ENCODE measurements at regions of chr2 and their contacts with region 1.

Region 1: DNA sequence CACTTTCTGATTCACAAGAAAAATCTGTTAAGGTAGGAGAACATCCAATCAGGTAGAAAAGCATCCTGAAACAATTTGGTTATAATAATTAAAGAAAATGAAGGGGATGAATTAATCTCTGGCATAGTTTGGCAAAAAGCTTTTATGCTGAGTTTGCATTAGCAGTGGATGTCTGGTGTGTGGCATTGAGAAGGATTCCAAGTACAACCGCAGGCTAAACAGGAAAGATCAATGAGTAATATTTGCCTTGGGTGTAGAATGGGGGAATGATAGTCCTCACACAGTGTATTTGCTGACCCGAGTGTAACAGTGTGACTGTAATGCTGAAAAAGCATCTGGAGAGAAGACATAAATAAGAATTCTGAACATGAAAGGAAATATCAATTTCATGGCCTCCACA is 68.3 kb upstream of the SESTD1 start:
- DNase-seq: peak; percentile 87
- ATAC-seq: peak; percentile 96
- H3K4me3 ChIP-seq: no peak overlapping the region
- H3K27ac ChIP-seq: 0 out of 2 replicates have a peak overlapping the region, but pooled peaks have one; percentile 5
- H3K4me1 ChIP-seq: peaks cover 31% of the 10 kb centered on the region
- H3K27me3 ChIP-seq: no peaks in the 10 kb centered on the region
- CTCF ChIP-seq: no peak

Region 2: GRCh38 chr2:179233083-179233490 is 99.8 kb before region 1 on chr2:
- CTCF ChIA-PET with region 1: no interaction called
- POLR2A ChIA-PET with region 1: no interaction called
- intact Hi-C with region 1: loop called (anchors 1 kb)
- DNase-seq: peak; percentile 68
- ATAC-seq: peak; percentile 90
- H3K4me3 ChIP-seq: peak overlapping the region; percentile 59
- H3K27ac ChIP-seq: peak overlapping the region; percentile 80
- H3K4me1 ChIP-seq: peaks cover 20% of the 10 kb centered on the region
- H3K27me3 ChIP-seq: no peaks in the 10 kb centered on the region
- CTCF ChIP-seq: no peak

Region 3: GRCh38 chr2:179272406-179273192 is 60.3 kb before region 1 on chr2:
- CTCF ChIA-PET with region 1: no interaction called
- POLR2A ChIA-PET with region 1: interaction called, 4 read pairs
- intact Hi-C with region 1: loop called (anchors 2 kb)
- DNase-seq: peak; percentile 75
- ATAC-seq: peak; percentile 79
- H3K4me3 ChIP-seq: peak overlapping the region; percentile 30; the same call in 1 of the 2 replicates
- H3K27ac ChIP-seq: peak overlapping the region; percentile 89
- H3K4me1 ChIP-seq: peaks cover 60% of the 10 kb centered on the region
- H3K27me3 ChIP-seq: no peaks in the 10 kb centered on the region
- CTCF ChIP-seq: no peak

Region 4: DNA sequence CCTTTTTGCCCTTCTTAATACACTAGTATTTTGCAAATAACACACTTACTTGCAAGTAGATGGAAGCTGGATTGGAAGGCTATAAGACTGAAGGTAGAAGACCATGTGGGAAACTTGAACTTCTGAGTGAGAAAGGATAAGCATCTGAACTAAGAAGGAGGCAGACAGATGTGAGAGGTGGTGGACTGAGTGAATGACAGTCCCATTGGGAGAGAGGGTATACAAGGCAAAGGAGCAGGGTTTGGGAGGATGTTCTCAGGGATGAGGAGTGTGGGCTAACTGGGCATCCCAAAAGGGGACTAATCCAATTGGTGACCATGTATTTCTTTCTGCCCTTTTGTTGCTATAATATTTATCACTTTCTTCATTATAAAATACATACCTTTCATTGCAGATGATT is 47.8 kb before region 1 on chr2:
- CTCF ChIA-PET with region 1: no interaction called
- POLR2A ChIA-PET with region 1: no interaction called
- intact Hi-C with region 1: loop called (anchors 5 kb)
- DNase-seq: no peak
- ATAC-seq: no peak
- H3K4me3 ChIP-seq: no peak overlapping the region
- H3K27ac ChIP-seq: no peak overlapping the region
- H3K4me1 ChIP-seq: no peaks in the 10 kb centered on the region
- H3K27me3 ChIP-seq: no peaks in the 10 kb centered on the region
- CTCF ChIP-seq: no peak

Region 5: DNA sequence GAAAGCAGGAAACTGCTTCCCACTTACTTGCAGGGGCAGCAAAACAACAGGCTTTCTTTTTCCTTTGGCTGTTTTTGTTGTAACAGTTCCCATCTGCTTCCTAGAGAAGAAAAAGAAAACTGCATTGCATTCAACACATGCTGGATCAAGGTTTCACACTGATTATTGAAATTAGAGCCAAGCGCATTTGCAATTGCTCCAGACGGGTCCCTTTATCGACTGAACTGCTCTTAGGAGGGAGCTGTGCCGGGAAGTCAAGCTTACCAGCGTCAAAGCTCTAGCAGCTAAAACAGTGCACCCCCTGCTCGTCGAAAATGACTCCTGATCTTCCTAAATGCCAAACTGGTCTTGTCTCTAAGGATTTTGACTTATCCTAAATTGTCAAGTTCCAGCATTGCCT is 95.7 kb after region 1 on chr2:
- CTCF ChIA-PET with region 1: no interaction called
- POLR2A ChIA-PET with region 1: no interaction called
- intact Hi-C with region 1: no loop called
- DNase-seq: no peak
- ATAC-seq: no peak
- H3K4me3 ChIP-seq: no peak overlapping the region
- H3K27ac ChIP-seq: no peak overlapping the region
- H3K4me1 ChIP-seq: no peaks in the 10 kb centered on the region
- H3K27me3 ChIP-seq: no peaks in the 10 kb centered on the region
- CTCF ChIP-seq: no peak

Region 6: GRCh38 chr2:179569831-179570233 is 236.9 kb after region 1 on chr2:
- CTCF ChIA-PET with region 1: no interaction called
- POLR2A ChIA-PET with region 1: no interaction called
- intact Hi-C with region 1: no loop called
- DNase-seq: peak; percentile 68
- ATAC-seq: no peak
- H3K4me3 ChIP-seq: no peak overlapping the region
- H3K27ac ChIP-seq: no peak overlapping the region
- H3K4me1 ChIP-seq: peaks cover 27% of the 10 kb centered on the region
- H3K27me3 ChIP-seq: no peaks in the 10 kb centered on the region
- CTCF ChIP-seq: no peak